ENCODE measurements at regions of chr20 and their contacts with region 1.

Region 1: DNA sequence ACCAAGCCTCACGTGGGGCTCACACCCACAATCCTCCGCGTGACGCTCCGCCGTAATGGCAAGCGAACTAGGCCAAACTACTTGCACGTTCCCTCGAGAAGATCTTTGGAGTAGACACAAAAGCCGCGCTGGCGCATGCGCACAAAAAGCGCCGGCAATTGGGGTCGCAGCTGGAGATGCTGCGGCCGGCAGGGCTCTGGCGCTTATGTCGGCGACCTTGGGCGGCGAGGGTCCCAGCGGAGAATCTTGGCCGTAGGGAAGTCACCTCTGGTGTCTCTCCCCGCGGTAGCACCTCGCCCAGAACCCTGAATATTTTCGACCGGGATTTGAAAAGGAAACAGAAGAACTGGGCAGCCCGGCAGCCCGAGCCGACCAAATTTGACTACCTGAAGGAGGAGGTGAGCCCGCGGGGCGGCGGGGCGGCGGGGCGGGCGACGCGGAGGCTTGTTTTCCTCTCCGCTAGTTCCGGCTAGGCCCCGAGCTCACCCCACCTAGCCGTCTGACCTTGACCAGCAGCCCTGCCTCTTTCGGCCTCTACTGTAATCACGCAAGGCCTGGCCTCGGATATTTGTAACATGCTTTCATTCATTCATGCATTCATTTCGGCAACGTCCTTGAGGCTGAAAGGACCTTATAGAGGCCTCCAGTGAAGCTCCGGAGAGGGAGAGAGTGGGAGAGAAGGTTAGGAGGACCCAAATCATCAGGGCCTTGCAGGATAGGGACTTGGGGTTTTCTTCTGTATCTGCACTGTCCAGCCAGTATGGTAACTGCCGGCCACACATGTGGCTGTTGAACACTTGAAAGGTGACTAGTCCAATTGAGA is at the starts of genes ESF1 and NDUFAF5:
- DNase-seq: peak; percentile 98
- H3K4me3 ChIP-seq: peak within 1 kb of the TSS; percentile 68 to 96 (median 83)
- H3K27ac ChIP-seq: peak within 1 kb of the TSS; percentile 60
- H3K4me1 ChIP-seq: peaks cover 16% of the 10 kb centered on the region
- H3K27me3 ChIP-seq: no peaks in the 10 kb centered on the region
- CTCF ChIP-seq: no peak
- POLR2A ChIP-seq: no peak
- total RNA-seq, gene ESF1: 15.2 and 15.5 TPM in 2 replicates
- total RNA-seq, gene NDUFAF5: 26.4 and 28.4 TPM in 2 replicates

Region 2: GRCh38 chr20:13119583-13119982 is 665.5 kb before region 1 on chr20:
- CTCF ChIA-PET with region 1: interaction called, 16 read pairs
- POLR2A ChIA-PET with region 1: no interaction called
- dilution Hi-C with region 1: no loop called
- intact Hi-C with region 1: loop called (anchors 1 kb)
- DNase-seq: peak; percentile 64
- H3K4me3 ChIP-seq: no peak overlapping the region
- H3K27ac ChIP-seq: no peak overlapping the region
- H3K4me1 ChIP-seq: no peaks in the 10 kb centered on the region
- H3K27me3 ChIP-seq: no peaks in the 10 kb centered on the region
- CTCF ChIP-seq: peak; percentile 68 to 76
- POLR2A ChIP-seq: no peak

Region 3: GRCh38 chr20:13325033-13325432 is 460.1 kb before region 1 on chr20:
- CTCF ChIA-PET with region 1: interaction called, 10 read pairs
- POLR2A ChIA-PET with region 1: no interaction called
- dilution Hi-C with region 1: no loop called
- intact Hi-C with region 1: no loop called
- DNase-seq: peak; percentile 32
- H3K4me3 ChIP-seq: no peak overlapping the region
- H3K27ac ChIP-seq: no peak overlapping the region
- H3K4me1 ChIP-seq: no peaks in the 10 kb centered on the region
- H3K27me3 ChIP-seq: peaks cover 10 to 19% of the 10 kb centered on the region in 2 experiments
- CTCF ChIP-seq: peak; percentile 30 to 58
- POLR2A ChIP-seq: no peak

Region 4: GRCh38 chr20:13458860-13459451 is 326.1 kb before region 1 on chr20:
- CTCF ChIA-PET with region 1: interaction called, 16 read pairs
- POLR2A ChIA-PET with region 1: no interaction called
- dilution Hi-C with region 1: no loop called
- intact Hi-C with region 1: loop called (anchors 5 kb)
- DNase-seq: peak; percentile 35
- H3K4me3 ChIP-seq: no peak overlapping the region
- H3K27ac ChIP-seq: no peak overlapping the region
- H3K4me1 ChIP-seq: no peaks in the 10 kb centered on the region
- H3K27me3 ChIP-seq: no peaks in the 10 kb centered on the region
- CTCF ChIP-seq: peak; percentile 72 to 74
- POLR2A ChIP-seq: no peak

Region 5: DNA sequence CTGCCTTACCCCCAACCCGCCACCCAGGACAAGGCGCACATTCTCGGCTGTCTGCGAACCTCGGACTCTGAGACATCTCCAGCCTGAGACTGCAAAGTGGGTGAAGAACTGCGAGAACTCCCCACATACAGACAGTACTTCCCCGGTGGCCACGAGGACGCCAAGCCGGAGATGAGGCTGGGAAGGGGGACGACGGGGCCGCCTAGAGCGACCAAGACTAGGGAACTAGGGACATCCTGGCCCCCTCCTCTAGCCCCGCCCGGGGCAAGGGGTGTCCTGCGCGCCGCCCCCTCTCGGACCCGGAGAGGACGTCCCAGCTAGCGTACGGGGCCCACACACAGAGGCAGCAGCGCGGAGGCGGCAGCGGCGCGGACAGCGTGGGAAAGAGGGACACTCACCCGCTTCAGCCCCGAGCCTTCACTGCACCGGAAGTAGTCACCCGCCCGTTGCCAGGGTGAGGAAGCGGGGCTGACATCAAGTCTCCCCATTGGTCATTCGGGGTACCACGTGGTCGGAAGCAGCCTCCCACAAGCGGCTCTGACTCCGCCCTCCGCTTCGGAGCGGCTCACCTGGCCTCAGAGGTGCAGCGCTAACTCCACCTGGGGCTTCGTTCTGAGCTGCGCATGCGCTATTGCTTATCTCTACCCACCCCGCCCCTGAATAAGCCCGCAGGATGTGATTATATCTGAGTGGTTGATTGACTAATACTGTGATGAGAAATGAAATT is 146.4 kb before region 1 on chr20 and contains the start of gene TASP1:
- CTCF ChIA-PET with region 1: no interaction called
- POLR2A ChIA-PET with region 1: interaction called, 7 read pairs
- dilution Hi-C with region 1: no loop called
- intact Hi-C with region 1: loop called (anchors 2 kb)
- DNase-seq: peak; percentile 94
- H3K4me3 ChIP-seq: peak within 1 kb of the TSS; percentile 80 to 90 (median 81)
- H3K27ac ChIP-seq: peak within 1 kb of the TSS; percentile 52
- H3K4me1 ChIP-seq: peaks cover 9% of the 10 kb centered on the region
- H3K27me3 ChIP-seq: peaks cover 0 to 6% of the 10 kb centered on the region in 2 experiments
- CTCF ChIP-seq: no peak
- POLR2A ChIP-seq: peak; percentile 48
- total RNA-seq, gene TASP1: 7.5 and 8.9 TPM in 2 replicates

Region 6: DNA sequence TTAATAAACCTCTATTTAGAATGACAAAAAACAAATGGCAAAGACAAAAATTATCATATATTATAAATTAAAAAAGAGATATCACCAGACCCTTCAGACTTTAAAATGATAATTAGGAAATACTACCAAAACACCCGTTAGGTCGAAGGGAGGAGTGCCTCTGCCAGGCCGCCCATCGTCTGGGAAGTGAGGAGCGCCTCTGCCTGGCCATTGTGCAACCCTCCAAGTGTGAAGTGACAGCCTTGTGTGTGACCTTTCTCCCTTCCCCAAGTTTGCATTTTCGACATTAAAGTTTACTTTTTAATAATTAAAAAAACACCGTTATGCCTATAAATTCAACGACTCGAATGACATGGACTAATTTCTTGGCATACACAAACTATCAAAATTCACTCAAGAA is 81.8 kb before region 1 on chr20:
- CTCF ChIA-PET with region 1: no interaction called
- POLR2A ChIA-PET with region 1: no interaction called
- dilution Hi-C with region 1: no loop called
- intact Hi-C with region 1: no loop called
- DNase-seq: no peak
- H3K4me3 ChIP-seq: no peak overlapping the region
- H3K27ac ChIP-seq: no peak overlapping the region
- H3K4me1 ChIP-seq: no peaks in the 10 kb centered on the region
- H3K27me3 ChIP-seq: peaks cover 0 to 2% of the 10 kb centered on the region in 2 experiments
- CTCF ChIP-seq: no peak
- POLR2A ChIP-seq: no peak

Region 7: GRCh38 chr20:13771853-13772453 is 13.2 kb before region 1 on chr20:
- CTCF ChIA-PET with region 1: interaction called, 38 read pairs
- POLR2A ChIA-PET with region 1: interaction called, 3 read pairs
- dilution Hi-C with region 1: no loop called
- intact Hi-C with region 1: no loop called
- DNase-seq: peak; percentile 31
- H3K4me3 ChIP-seq: no peak overlapping the region
- H3K27ac ChIP-seq: peak overlapping the region; percentile 34
- H3K4me1 ChIP-seq: peaks cover 14% of the 10 kb centered on the region
- H3K27me3 ChIP-seq: no peaks in the 10 kb centered on the region
- CTCF ChIP-seq: peak; percentile 8 to 16
- POLR2A ChIP-seq: no peak

Region 8: DNA sequence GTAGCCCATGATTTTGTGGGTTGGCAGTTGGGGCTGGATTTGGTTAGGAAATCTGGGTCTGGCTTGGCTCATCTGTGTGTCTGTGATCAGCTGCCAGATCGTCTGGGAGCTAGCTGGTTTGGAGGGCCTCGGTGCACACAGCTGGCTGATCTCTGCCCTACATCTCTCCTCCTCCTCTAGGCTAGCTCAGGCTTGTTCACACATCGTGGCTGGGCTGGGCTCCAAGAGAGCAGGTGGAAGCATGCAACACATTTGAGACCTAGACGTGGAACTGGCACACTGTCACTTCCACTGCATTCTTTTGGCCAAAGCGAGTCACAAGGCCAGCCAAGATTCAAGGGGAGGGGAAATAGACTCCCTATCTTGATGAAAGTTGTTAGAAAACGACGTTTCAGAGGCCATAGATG is 15.6 kb after region 1 on chr20:
- CTCF ChIA-PET with region 1: interaction called, 31 read pairs
- POLR2A ChIA-PET with region 1: no interaction called
- dilution Hi-C with region 1: no loop called
- intact Hi-C with region 1: no loop called
- DNase-seq: peak; percentile 71
- H3K4me3 ChIP-seq: no peak overlapping the region
- H3K27ac ChIP-seq: peak overlapping the region; percentile 6
- H3K4me1 ChIP-seq: no peaks in the 10 kb centered on the region
- H3K27me3 ChIP-seq: no peaks in the 10 kb centered on the region
- CTCF ChIP-seq: no peak
- POLR2A ChIP-seq: no peak